PC-9 (cell line): ENCODE measurements at regions of chr11 and their contacts with region 1.

Region 1: GRCh38 chr11:72430741-72431570 is 3.4 kb downstream of the CLPB start:
- DNase-seq: peak in 1 of 2 experiments; percentile 37
- H3K4me3 ChIP-seq: no peak overlapping the region
- H3K27ac ChIP-seq: no peak overlapping the region
- H3K4me1 ChIP-seq: peaks cover 10% of the 10 kb centered on the region
- H3K27me3 ChIP-seq: no peaks in the 10 kb centered on the region
- CTCF ChIP-seq: peak; percentile 82

Region 2: DNA sequence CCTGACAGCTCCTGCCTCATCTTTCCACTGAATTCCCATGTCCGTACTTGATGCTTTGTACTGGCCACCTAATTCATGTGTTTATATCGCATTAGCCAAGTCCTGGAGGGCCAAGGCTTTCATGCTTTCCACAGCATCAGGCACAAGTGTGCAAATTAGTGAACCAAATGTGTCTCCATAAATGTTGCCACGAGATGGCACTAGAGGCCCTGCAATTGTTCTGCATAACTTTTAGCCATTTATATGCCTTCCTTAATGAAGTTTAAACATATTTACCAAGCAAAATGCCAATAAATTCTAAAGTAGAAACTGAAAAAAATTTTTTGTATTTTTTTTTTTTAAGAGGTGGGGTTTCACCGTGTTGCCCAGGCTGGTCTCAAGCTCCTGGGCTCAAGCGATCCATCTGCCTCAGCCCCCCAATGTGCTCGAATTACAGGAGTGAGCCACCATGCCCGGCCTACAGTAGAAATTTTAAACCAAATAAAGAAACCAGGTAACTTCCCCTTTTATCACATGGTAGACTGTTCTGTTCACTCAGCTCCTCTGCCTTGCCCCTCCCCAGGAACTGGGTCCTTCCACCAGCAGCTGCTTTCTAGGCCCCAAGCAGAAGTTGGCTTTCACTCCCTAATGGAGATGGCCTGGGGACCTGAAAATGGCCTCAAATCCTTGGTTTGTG is 453.1 kb before region 1 on chr11:
- CTCF ChIA-PET with region 1: interaction called, 11 read pairs
- POLR2A ChIA-PET with region 1: no interaction called
- intact Hi-C with region 1: loop called (anchors 1 kb)
- DNase-seq: peak; percentile 35 to 40
- H3K4me3 ChIP-seq: no peak overlapping the region
- H3K27ac ChIP-seq: no peak overlapping the region
- H3K4me1 ChIP-seq: no peaks in the 10 kb centered on the region
- H3K27me3 ChIP-seq: no peaks in the 10 kb centered on the region
- CTCF ChIP-seq: peak; percentile 85

Region 3: DNA sequence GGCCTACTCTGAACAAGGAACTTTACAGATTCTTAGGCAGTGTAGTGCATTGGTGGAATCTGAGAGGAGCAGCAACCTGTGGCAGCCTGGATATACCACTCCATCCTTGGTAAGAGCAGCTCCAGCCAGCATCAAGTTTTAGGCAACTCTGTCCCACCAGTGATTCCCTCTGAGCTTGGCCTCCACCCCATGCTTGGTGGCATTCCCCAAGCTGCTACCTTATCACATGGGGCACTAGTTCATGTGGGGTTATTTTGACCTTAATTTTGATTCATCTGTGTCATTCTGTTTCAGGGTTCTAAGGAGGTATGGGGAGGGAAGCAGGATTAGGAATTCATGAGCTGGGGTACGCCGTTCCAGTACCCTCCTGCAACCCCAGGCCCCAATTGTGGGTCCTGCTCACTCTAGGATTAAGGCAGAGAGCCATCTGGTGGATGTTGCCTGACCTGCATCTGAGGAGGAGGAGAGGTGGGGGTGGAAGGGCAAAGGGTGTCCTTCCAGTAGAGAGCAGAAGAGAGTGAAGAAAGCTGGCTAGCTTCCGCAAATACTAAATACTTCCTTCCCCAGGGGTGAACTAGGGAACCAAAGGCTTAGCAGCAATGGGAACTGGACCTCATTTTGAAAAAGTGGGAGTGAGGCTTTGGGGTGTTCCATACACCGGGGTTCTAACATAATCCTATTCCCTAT is 339.8 kb before region 1 on chr11:
- CTCF ChIA-PET with region 1: interaction called, 3 read pairs
- POLR2A ChIA-PET with region 1: no interaction called
- intact Hi-C with region 1: loop called (anchors 5 kb)
- DNase-seq: peak in 1 of 2 experiments; percentile 60
- H3K4me3 ChIP-seq: no peak overlapping the region
- H3K27ac ChIP-seq: 0 out of 2 replicates have a peak overlapping the region, but pooled peaks have one; percentile 8
- H3K4me1 ChIP-seq: no peaks in the 10 kb centered on the region
- H3K27me3 ChIP-seq: no peaks in the 10 kb centered on the region
- CTCF ChIP-seq: peak; percentile 93

Region 4: GRCh38 chr11:72189461-72190275 is 241.3 kb before region 1 on chr11:
- CTCF ChIA-PET with region 1: interaction called, 3 read pairs
- POLR2A ChIA-PET with region 1: no interaction called
- intact Hi-C with region 1: loop called (anchors 5 kb)
- DNase-seq: peak in 1 of 2 experiments; percentile 42
- H3K4me3 ChIP-seq: no peak overlapping the region
- H3K27ac ChIP-seq: no peak overlapping the region
- H3K4me1 ChIP-seq: peaks cover 10% of the 10 kb centered on the region
- H3K27me3 ChIP-seq: no peaks in the 10 kb centered on the region
- CTCF ChIP-seq: no peak